ENCODE measurements at regions of chr17 and their contacts with region 1.

Region 1: DNA sequence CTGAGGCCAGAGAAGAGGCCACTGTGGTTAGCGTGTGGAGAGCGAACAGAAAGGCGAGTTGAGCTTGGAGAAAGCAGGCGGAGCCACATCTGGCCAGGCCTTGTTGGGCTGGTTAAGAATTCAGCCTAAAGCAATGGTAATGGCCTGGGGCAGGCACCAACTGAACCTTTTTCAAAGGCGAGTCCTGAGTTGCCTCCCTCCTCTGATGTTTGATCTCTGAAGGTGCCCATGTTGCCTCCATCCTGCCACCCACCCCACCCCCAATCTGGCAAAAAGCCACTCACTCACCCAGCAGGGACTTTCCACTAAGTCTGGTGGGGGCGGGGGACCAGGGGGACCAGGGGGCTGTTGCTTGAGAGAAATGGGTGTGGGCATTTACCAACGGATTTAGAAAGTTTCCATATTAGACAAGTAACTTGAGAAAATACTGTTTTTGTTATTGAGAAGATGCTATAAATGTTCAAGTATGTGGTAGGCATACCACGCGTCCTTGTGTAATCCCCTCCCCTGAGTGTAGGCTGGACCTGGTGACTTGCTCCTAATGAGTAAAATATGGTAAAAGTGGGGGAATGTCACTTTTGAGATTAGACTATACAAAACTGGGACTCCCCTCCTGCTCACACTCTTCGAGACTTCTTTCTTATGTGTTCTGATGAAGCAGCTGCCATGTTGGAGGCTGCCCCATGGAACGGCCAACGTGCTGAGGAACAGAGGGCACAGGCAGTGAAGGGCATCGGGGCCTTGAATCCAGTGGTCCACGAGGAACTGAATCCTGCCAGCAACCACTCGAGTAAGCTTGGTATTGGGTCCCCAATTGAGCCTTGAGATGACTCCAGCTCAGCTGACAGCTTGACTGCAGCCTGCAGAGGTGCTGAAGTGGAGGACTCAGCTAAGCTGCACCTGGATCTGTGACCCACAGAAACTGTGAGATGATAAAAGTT is 29.9 kb upstream of the TNS4 start:
- DNase-seq: peak; percentile 23
- ATAC-seq: no peak

Region 2: DNA sequence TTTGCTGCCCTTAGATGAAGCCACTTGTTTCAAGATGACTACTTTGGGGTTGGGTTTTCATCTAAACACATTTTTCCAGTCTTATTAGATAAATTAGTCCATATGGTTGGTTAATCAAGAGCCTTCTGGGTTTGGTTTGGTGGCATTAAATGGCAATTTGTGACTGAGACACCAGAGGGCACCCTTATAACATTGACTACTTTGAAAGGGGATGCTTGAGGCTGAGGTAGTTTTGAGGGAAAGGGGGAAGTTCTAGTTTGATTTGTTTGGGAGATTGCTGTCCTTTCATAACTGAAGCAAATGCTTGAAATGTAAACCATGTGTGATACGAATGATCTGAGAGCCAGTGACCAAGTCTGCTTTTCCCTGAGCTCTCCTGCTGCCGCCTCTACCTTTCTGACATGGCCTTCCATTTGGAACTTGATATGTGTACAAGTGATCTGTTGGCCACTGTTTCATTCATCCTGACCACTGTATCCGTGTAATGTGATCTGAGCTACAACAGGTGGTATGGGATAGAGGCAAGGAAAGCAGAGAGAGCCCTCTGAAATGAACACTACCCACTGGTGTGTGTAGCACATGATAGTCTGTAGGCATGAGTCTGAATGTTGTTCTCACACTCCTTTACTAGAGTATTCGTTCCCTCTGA is 228.2 kb before region 1 on chr17:
- intact Hi-C with region 1: loop called in 1 of 2 experiments (anchors 5 kb)
- DNase-seq: no peak
- ATAC-seq: peak; percentile 50 to 53

Region 3: DNA sequence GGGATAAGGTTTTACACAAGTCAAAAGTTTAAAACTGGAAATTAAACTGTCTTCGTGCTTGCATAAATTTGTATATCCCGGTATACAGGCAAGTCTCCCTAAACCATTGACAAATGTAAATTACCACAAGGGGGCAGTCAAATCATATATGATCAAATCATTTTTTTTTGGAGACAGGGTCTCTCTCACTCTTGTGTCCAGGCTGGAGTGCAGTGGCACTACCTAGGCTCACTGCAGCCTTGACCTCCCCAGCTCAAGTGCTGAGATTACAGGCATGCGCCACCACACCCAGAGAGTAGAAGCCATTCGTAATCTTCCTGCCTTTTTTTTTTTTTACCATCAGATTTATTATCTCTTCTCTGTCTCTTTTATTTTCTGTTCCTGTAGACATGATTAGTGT is 132.1 kb before region 1 on chr17:
- intact Hi-C with region 1: loop called (anchors 1 to 10 kb)
- DNase-seq: no peak
- ATAC-seq: peak; percentile 53 to 67

Region 4: DNA sequence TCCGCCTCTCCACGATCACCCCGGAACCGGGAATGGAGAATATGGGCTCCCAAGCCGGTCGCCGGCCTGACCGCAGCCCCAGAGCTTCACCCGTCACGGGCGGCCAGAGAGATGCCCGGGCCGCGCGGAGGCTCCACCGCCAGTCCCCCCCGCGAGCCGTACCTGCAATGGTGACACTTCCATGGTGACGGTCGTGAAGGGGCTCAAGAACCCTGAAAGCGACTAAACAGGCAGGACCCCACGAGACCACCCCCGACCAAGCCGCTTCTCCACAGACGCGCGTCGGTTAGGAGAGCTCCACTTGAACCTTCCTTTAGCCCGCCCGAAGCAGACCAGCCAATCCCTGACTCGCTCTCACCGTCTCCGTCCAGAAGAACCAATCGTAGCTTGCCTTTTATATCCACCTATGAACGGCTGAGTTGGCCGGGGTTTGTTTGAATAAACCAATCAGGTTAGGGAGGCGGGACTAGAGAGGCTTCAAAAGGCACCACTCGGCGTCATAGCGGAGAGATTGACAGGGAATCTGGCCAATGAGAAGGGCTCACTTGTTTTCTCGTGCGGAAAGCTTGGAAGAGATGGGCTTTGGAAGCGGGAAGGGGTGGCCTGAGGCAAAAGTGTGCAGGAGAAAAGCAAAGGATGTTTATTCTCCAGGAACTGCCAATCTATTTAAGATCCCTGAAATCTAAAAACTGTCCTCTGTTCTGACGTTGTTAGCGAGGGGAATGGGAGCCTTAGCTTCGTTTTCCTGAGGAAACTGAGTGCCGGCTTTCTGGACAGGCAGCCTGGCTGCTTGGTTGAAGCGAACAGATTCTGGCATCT is 113.5 kb before region 1 on chr17 and contains the start of gene TOP2A:
- intact Hi-C with region 1: no loop called
- DNase-seq: peak; percentile 95
- ATAC-seq: peak; percentile 100
- total RNA-seq, gene TOP2A: 0.47 to 4.2 TPM

Region 5: GRCh38 chr17:40443583-40444327 is 87.6 kb before region 1 on chr17:
- intact Hi-C with region 1: loop called (anchors 5 kb)
- DNase-seq: peak; percentile 89
- ATAC-seq: peak; percentile 40 to 66

Region 6: GRCh38 chr17:41171886-41172285 is 640.6 kb after region 1 on chr17:
- intact Hi-C with region 1: no loop called
- DNase-seq: no peak
- ATAC-seq: no peak

Measured in left cardiac atrium (tissue), 4 donors.